Gastrocnemius medialis (tissue), 4 donors: ENCODE measurements at regions of chr6 and their contacts with region 1.

Region 1: DNA sequence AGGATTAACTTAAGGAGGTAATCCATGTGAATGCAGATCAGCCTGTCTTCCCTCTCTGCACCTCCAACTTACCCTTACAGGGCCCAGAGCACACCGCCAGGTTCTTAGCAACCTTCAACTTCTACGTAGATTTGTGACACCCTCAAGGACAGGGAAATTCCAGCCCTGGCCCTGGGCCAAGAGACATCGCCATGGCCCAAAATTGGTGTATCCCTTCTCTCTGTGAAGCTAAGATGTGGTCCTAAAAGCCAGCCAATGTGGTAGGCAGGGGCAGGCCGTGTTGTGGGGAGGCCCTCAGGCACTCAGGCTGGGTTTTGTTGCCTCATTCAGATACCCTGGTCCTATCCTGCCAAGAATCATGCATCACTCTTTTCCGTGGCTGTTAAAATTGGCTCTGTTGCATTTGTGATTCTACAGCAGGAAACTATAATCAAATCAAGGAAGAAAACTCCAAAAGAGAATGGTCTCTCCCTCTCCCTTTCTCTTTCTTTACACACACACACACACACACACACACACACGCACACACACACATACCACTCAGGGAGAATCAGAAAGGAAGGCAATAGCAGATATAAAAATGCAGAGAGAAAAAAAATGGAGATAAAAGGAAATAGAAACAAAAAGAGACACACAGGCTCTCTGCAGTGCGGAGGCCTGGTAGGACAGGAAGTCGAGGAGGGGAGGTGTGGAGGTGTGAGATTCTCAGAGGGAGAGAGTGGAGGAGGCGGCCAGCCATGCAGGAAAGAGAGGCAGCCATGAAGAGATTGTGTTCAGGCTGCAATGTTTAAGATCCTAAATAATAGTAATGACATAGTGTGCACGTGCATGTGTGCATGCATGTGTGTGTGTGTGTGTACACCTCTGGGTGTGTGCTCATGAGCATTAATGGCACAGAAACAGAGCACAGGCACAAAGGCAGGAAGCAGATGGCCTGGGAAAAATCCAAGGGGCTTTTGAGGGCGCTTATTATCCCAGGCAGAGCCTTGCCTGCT is 201.8 kb upstream of the LRFN2 start:
- DNase-seq: no peak
- ATAC-seq: no peak
- H3K4me3 ChIP-seq: no peak overlapping the region
- H3K27ac ChIP-seq: no peak overlapping the region
- H3K4me1 ChIP-seq: peaks cover 4 to 6% of the 10 kb centered on the region in 2 donors
- H3K27me3 ChIP-seq: no peaks in the 10 kb centered on the region
- CTCF ChIP-seq: no peak
- POLR2A ChIP-seq: no peak

Region 2: DNA sequence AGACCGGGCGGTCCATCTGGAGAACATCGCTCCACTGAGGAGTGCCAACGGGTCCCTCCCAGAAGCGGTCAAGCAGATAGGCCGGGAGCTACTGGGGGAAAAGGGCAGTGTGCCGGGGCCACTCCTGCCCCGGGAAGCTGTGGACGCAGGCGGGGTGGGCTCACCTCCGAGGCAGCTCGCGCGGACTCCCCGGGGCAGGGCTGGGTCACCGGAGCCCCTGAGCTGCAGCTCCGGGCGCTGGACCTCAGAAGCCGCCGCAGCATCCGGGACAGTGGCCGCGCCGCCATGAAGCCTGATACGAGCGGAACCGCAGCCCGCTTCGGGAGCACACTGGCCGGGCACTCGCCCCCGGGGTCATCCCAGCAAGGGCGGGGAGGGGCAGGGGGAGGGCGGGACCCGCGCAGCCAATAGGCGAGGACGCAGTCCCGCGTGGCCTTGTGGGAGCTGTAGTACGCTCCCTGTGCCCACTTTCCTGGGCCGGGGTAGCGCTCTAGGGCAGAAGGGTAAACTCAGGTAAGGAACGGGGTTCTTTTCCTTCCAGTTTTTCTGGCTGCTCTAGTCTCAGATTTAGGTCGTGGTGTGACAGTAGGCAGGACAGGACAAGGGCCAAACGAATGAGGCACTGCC is 854.7 kb before region 1 on chr6 and contains the start of gene MOCS1:
- in situ Hi-C with region 1: no loop called
- intact Hi-C with region 1: loop called (anchors 10 kb)
- DNase-seq: peak; percentile 87 to 92
- ATAC-seq: peak; percentile 39 to 63
- H3K4me3 ChIP-seq: peak within 1 kb of the TSS; percentile 80 to 98 (median 94)
- H3K27ac ChIP-seq: peak within 1 kb of the TSS; percentile 95 to 99 (median 97)
- H3K4me1 ChIP-seq: peaks cover 59 to 63% of the 10 kb centered on the region in 2 donors
- H3K27me3 ChIP-seq: no peaks in the 10 kb centered on the region
- CTCF ChIP-seq: no peak
- POLR2A ChIP-seq: peak; percentile 96 to 97
- total RNA-seq, gene MOCS1: 26.4 to 61.7 (median 38.4) TPM

Region 3: GRCh38 chr6:40965046-40965445 is 176.1 kb after region 1 on chr6:
- in situ Hi-C with region 1: no loop called
- intact Hi-C with region 1: no loop called
- DNase-seq: no peak
- ATAC-seq: no peak
- H3K4me3 ChIP-seq: no peak overlapping the region
- H3K27ac ChIP-seq: no peak overlapping the region
- H3K4me1 ChIP-seq: peaks cover 3 to 7% of the 10 kb centered on the region in 2 donors
- H3K27me3 ChIP-seq: no peaks in the 10 kb centered on the region
- CTCF ChIP-seq: no peak
- POLR2A ChIP-seq: no peak